Breast epithelium (tissue), 4 donors: ENCODE measurements at regions of chr3 and their contacts with region 1.

Region 1: DNA sequence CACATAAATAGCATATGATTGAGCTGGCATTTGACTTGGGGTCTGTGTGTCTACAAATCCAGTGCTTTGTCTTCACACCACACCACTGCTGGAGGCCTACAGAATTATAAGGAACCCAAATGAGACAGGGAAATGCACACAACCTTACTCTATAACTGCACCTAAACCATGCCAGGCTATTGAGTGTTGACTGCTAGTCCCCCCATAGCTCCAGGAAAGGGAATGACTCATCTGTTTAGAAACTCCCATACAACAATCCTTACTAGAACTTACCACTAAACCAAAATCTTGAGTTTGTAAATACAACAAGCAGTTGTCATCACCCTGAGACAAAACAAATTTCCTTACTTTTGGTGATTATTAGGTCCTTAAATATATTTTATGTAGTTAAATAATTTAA is 16.9 kb upstream of the TSC22D2 start:
- DNase-seq: no peak
- H3K4me3 ChIP-seq: no peak overlapping the region
- H3K27ac ChIP-seq: no peak overlapping the region
- H3K4me1 ChIP-seq: no peaks in the 10 kb centered on the region
- H3K27me3 ChIP-seq: no peaks in the 10 kb centered on the region
- CTCF ChIP-seq: no peak
- POLR2A ChIP-seq: no peak

Region 2: DNA sequence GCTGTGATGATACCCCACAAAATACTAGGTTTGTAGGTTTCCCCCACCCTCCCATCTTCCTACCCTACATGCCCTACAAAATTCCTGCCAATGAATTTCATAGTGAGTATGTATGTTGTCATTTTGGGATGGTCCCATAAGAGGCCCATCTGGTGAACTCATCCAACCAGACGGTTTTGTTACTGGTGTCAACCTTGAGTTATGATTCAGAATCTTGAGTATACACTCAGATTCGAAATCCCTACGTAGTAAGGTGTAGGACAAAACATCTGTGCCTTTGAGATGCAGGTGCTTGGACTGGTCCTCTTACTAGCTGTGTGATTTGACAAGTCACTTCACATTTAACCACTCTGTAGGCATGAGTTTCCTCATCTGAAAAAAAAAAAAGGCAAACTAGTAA is 368.1 kb after region 1 on chr3:
- intact Hi-C with region 1: loop called (anchors 5 kb)
- DNase-seq: no peak
- H3K4me3 ChIP-seq: no peak overlapping the region
- H3K27ac ChIP-seq: no peak overlapping the region
- H3K4me1 ChIP-seq: peaks cover 0 to 4% of the 10 kb centered on the region in 2 donors
- H3K27me3 ChIP-seq: no peaks in the 10 kb centered on the region
- CTCF ChIP-seq: no peak
- POLR2A ChIP-seq: no peak